GM12878 (cell line): ENCODE measurements at regions of chr5 and their contacts with region 1.

Region 1: DNA sequence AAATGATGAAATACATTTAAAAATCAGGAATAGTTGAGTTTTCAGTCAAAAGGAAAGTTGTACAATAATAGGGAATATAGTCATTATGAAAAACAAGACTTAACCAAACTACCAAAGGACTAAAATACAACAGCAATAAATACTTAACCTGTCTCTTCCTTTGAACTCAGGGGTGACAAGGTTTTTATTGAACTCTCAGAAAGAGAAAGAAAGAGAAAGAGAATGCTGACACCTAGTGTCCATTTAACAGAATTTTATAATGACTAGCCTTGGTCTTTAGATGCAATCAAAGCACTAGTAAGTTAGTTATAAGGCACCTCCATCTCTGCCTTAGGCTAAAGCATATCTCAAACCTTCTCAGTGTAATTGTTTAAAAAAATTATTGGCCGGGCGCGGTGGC is 47.5 kb downstream of the UIMC1 start:
- DNase-seq: no peak
- ATAC-seq: peak; percentile 82
- H3K4me3 ChIP-seq: no peak overlapping the region
- H3K27ac ChIP-seq: no peak overlapping the region
- H3K4me1 ChIP-seq: no peaks in the 10 kb centered on the region
- H3K27me3 ChIP-seq: no peaks in the 10 kb centered on the region
- CTCF ChIP-seq: peak; percentile 32 to 59 (median 37); a peak in 4 of 6 replicates
- EP300 ChIP-seq: no peak
- POLR2A ChIP-seq: no peak
- RAD21 ChIP-seq: peak; percentile 54

Region 2: GRCh38 chr5:176817841-176818377 is 141.1 kb before region 1 on chr5:
- CTCF ChIA-PET with region 1: no interaction called
- POLR2A ChIA-PET with region 1: no interaction called
- RAD21 ChIA-PET with region 1: no interaction called
- SMC1A ChIA-PET with region 1: no interaction called
- in situ Hi-C with region 1: no loop called
- intact Hi-C with region 1: loop called (anchors 10 kb)
- DNase-seq: no peak
- ATAC-seq: peak; percentile 36
- H3K4me3 ChIP-seq: no peak overlapping the region
- H3K27ac ChIP-seq: no peak overlapping the region
- H3K4me1 ChIP-seq: no peaks in the 10 kb centered on the region
- H3K27me3 ChIP-seq: peaks cover 0 to 12% of the 10 kb centered on the region in 2 experiments; a peak in 3 of 4 replicates
- CTCF ChIP-seq: peak; percentile 16 to 29 (median 18); a peak in 2 of 6 replicates
- EP300 ChIP-seq: no peak
- POLR2A ChIP-seq: no peak
- RAD21 ChIP-seq: 0 out of 2 replicates have a peak, but pooled peaks have one; percentile 2